ENCODE measurements at regions of chr7 and their contacts with region 1.

Region 1: DNA sequence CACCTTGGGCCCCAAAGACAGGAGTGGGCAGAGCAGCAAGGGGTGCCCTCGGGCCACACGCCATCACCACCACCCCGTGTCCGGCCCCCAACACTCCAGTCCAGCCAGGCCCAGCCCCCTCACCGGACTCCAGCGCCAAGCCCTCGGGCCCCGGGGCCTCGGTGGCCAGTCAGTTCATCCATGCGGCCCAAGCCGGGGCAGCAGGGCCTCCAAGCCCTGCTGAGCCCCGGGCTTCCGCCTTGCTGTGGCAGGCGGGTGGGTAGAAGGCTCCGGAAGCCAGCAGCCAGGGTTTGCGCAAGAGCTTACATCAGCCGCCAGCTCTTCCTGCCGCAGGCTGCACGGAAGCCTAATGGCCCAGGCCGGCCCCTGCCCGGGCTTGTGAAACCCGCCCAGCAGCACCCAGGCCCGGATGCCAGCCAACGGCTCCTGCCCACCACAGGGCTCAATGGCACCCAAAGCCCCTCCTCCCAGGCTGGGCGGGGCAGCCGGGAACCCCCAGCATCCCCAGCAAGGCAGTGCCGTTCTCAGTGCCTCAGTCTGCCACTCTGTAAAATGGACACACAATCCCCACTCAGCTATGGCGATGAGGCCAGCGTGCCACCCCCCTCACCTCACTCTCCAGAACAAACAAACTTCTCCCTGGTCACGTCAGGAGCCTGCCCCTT is 26.5 kb downstream of the TNRC18 start:
- DNase-seq: peak; percentile 80
- ATAC-seq: peak; percentile 94
- H3K4me3 Mint-ChIP-seq: peak overlapping the region; percentile 86
- H3K27ac Mint-ChIP-seq: peak overlapping the region; percentile 89
- H3K4me1 Mint-ChIP-seq: peaks cover 30% of the 10 kb centered on the region
- H3K27me3 Mint-ChIP-seq: no peaks in the 10 kb centered on the region
- CTCF ChIP-seq: no peak

Region 2: GRCh38 chr7:5193880-5194279 is 203.3 kb before region 1 on chr7:
- CTCF ChIA-PET with region 1: no interaction called
- POLR2A ChIA-PET with region 1: no interaction called
- intact Hi-C with region 1: loop called (anchors 1 kb)
- DNase-seq: no peak
- ATAC-seq: no peak
- H3K4me3 Mint-ChIP-seq: no peak overlapping the region
- H3K27ac Mint-ChIP-seq: no peak overlapping the region
- H3K4me1 Mint-ChIP-seq: peaks cover 22% of the 10 kb centered on the region
- H3K27me3 Mint-ChIP-seq: no peaks in the 10 kb centered on the region
- CTCF ChIP-seq: no peak

Region 3: DNA sequence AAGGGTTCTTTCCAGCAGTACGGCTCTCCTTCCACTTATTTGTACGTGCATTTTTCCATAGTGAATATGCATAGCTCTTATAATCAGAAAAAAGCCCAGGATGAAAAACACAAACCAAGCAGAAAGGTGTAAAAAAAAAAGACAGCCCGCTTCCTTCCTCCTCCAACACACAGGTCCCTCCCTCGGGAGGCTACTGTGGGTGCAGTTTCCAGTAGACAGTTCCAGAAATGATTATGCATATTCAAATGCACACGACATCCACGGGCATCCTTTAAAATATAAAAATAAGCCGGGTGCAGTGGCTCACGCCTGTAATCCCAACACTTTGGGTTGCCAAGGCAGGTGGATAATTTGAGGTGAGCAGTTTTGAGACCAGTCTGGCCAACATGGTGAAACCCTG is 33.4 kb before region 1 on chr7:
- CTCF ChIA-PET with region 1: interaction called, 12 read pairs
- POLR2A ChIA-PET with region 1: no interaction called
- intact Hi-C with region 1: loop called (anchors 1 kb)
- DNase-seq: no peak
- ATAC-seq: no peak
- H3K4me3 Mint-ChIP-seq: no peak overlapping the region
- H3K27ac Mint-ChIP-seq: no peak overlapping the region
- H3K4me1 Mint-ChIP-seq: peaks cover 22% of the 10 kb centered on the region
- H3K27me3 Mint-ChIP-seq: no peaks in the 10 kb centered on the region
- CTCF ChIP-seq: no peak

Region 4: GRCh38 chr7:5450549-5451372 is 53.6 kb after region 1 on chr7:
- CTCF ChIA-PET with region 1: interaction called, 8 read pairs
- POLR2A ChIA-PET with region 1: interaction called, 10 read pairs
- intact Hi-C with region 1: loop called (anchors 1 kb)
- DNase-seq: peak; percentile 31
- ATAC-seq: peak; percentile 75
- H3K4me3 Mint-ChIP-seq: no peak overlapping the region
- H3K27ac Mint-ChIP-seq: no peak overlapping the region
- H3K4me1 Mint-ChIP-seq: peaks cover 1% of the 10 kb centered on the region
- H3K27me3 Mint-ChIP-seq: peaks cover 2% of the 10 kb centered on the region
- CTCF ChIP-seq: no peak

Region 5: DNA sequence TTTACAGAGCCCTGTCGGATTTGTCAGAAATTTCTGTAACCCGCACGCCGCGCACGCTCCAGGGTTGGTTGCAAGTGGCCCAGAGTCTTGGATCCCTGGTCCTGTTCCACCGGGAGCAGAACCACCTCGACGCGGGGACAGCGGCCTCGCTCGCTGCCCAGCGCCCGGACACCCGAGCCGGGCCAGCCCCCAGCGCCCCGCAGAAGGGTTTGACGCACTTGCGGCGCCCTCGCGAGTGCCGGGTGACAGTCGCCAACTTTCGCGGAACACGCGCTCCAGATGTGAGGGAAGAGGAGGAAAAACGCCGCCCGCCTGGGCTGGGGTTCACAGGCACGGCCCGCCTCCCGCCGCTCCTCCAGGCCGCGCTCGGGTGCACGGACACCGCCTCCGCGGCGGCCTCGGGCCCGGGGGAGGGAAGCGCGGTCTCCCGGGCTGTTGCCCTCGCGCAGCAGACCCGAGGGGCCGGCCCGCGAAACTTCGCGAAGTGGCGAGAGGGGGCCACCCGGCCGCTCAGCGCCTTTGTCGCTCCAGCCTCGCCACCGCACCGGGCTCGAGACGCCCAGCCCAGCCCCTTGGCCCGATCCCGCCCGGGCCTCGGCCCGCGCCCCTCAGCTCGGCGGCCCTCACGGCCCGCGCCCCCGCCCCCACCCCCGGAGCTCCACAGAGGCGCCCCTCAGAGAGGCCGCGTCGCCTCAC is 383.8 kb after region 1 on chr7:
- CTCF ChIA-PET with region 1: no interaction called
- POLR2A ChIA-PET with region 1: no interaction called
- intact Hi-C with region 1: loop called (anchors 1 kb)
- DNase-seq: no peak
- ATAC-seq: peak; percentile 40
- H3K4me3 Mint-ChIP-seq: peak overlapping the region; percentile 88
- H3K27ac Mint-ChIP-seq: peak overlapping the region; percentile 80
- H3K4me1 Mint-ChIP-seq: peaks cover 41% of the 10 kb centered on the region
- H3K27me3 Mint-ChIP-seq: no peaks in the 10 kb centered on the region
- CTCF ChIP-seq: no peak